SK-N-SH (cell line): ENCODE measurements at regions of chr2 and their contacts with region 1.

Region 1: GRCh38 chr2:2291500-2292260 is 39.4 kb downstream of the MYT1L start:
- DNase-seq: peak; percentile 85
- H3K4me3 ChIP-seq: no peak overlapping the region
- H3K27ac ChIP-seq: peak overlapping the region in 1 of 2 experiments; percentile 16; a peak in 1 of 4 replicates
- H3K4me1 ChIP-seq: peaks cover 0 to 58% of the 10 kb centered on the region in 2 experiments; a peak in 2 of 4 replicates
- H3K27me3 ChIP-seq: no peaks in the 10 kb centered on the region
- CTCF ChIP-seq: peak; percentile 49
- EP300 ChIP-seq: no peak
- RAD21 ChIP-seq: peak; percentile 82

Region 2: DNA sequence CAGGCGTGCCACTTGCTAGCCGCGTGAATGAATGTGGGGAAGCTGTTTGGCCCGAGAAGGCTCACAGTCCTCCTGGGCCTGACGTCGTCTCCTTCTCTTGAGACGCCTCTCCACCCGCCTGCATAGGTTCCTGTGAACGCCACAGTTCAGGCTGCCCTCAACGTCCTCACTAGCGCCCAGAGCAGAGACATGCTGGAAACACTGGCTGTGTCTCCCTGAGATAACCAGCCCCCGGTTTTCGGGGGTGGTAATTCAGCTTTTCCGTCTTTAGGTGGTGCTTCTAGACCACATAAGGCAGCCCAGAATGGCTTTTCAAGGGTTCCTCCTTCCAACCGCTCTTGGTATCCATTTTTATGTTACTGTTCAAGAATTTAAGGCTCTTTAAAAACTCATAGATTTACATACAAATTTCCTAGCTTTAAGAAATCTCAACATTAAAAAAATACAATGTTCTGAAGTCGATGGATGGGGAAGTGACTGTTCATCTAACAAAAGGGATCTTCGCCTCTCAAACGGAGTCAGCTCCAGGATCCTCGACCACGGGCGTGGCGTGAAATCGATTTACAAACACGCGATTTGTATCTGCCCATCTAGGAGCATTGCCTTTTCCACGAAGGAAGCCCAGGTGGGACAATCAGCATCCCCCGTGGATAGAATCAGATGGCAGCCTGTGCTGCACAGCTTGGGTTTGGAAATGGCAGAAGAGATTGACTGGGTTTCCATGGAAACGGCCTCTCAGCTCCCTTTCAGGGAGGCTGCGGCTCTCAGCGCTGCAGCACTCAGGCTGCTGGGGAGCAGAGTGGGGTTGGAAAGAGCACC is 436.7 kb before region 1 on chr2:
- CTCF ChIA-PET with region 1: interaction called, 21 read pairs
- POLR2A ChIA-PET with region 1: no interaction called
- DNase-seq: peak; percentile 95
- H3K4me3 ChIP-seq: peak overlapping the region; percentile 46 to 47
- H3K27ac ChIP-seq: peak overlapping the region in 1 of 2 experiments; percentile 55; a peak in 2 of 4 replicates
- H3K4me1 ChIP-seq: peaks cover 3 to 16% of the 10 kb centered on the region in 2 experiments; a peak in 3 of 4 replicates
- H3K27me3 ChIP-seq: peaks cover 30% of the 10 kb centered on the region
- CTCF ChIP-seq: peak; percentile 67
- EP300 ChIP-seq: no peak
- RAD21 ChIP-seq: peak; percentile 95

Region 3: DNA sequence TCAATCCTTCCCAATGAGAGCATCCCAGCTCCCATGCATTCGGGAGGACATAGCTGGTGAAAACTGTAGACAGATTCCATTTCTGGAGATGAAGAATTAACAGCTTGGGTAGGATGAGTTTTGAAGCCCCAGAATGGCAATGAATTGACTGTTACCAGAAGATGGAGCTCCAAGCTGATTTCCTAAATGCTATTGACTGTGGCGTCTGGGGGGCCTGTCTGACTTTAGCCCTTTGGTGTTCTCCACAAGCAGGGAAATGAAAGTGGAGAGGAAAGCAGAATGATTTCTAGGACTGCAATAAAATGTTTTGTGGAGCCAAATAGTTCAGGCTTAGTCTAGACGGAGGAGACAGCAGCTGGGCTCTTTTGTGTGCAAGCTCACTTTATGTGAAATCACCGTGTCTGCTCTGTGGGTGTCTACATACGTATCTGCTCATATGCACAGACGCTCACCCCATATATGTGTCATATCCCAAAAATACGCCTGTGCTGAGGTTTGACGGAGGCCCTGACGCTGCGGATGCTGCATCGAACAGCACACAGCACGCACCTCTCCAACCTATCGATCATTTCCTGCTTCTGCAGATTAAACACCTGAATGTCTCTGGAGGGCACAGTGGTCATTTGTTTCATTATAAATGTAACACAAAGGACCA is 381.0 kb before region 1 on chr2:
- CTCF ChIA-PET with region 1: interaction called, 10 read pairs
- POLR2A ChIA-PET with region 1: no interaction called
- DNase-seq: peak; percentile 61
- H3K4me3 ChIP-seq: no peak overlapping the region
- H3K27ac ChIP-seq: peak overlapping the region in 1 of 2 experiments; percentile 4; a peak in 1 of 4 replicates
- H3K4me1 ChIP-seq: peaks cover 0 to 25% of the 10 kb centered on the region in 2 experiments; a peak in 1 of 4 replicates
- H3K27me3 ChIP-seq: no peaks in the 10 kb centered on the region
- CTCF ChIP-seq: no peak; the same call in 1 of the 2 replicates
- EP300 ChIP-seq: no peak
- RAD21 ChIP-seq: peak; percentile 68

Region 4: DNA sequence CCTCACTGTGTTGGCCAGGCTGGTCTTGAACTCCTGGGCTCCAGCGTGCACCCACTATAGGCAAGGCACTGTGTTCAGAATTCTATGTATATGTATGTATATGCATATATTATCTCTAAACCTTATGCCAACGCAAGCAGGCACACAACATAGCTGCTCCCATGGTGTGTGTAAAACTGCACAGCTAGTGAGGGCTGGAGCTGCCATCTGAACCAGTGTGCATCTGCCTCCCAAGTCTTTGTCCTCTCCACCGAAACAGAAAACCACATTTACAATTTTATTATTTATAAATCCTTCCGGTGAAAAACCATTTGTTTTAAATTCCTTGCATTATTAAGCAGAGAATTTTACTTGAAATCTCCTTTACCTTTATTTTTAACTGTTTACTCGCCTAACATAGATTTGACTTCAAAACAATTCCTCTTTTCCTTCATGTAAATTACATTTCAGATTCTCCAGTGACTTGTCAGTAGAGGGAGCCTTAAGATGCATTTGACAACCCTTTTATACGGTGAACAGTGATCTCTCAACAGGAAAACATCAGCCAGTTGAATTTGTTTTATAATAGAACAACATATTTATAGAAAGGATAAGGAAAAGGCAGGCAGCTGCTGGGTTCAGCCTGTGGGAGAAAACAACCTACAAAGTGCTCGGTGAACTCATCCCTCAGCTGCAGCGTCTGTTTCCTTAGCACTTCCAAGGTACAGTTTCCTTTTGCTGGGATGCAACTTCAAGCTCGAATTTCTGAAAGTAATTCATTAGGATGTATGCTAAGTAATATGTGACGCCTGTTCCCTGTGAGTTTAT is 61.9 kb before region 1 on chr2:
- CTCF ChIA-PET with region 1: interaction called, 10 read pairs
- POLR2A ChIA-PET with region 1: no interaction called
- DNase-seq: peak; percentile 44
- H3K4me3 ChIP-seq: no peak overlapping the region
- H3K27ac ChIP-seq: peak overlapping the region in 1 of 2 experiments; percentile 50; a peak in 2 of 4 replicates
- H3K4me1 ChIP-seq: peaks cover 0 to 13% of the 10 kb centered on the region in 2 experiments; a peak in 2 of 4 replicates
- H3K27me3 ChIP-seq: no peaks in the 10 kb centered on the region
- CTCF ChIP-seq: peak; percentile 40
- EP300 ChIP-seq: no peak
- RAD21 ChIP-seq: peak; percentile 74

Region 5: GRCh38 chr2:2271469-2271941 is 20.2 kb before region 1 on chr2:
- CTCF ChIA-PET with region 1: interaction called, 10 read pairs
- POLR2A ChIA-PET with region 1: no interaction called
- DNase-seq: peak; percentile 82
- H3K4me3 ChIP-seq: no peak overlapping the region
- H3K27ac ChIP-seq: peak overlapping the region; percentile 71 to 95
- H3K4me1 ChIP-seq: peaks cover 12 to 42% of the 10 kb centered on the region in 2 experiments; a peak in 3 of 4 replicates
- H3K27me3 ChIP-seq: no peaks in the 10 kb centered on the region
- CTCF ChIP-seq: no peak
- EP300 ChIP-seq: peak in 1 of 2 experiments; percentile 52; a peak in 1 of 4 replicates
- RAD21 ChIP-seq: peak; percentile 56

Region 6: GRCh38 chr2:2280483-2280882 is 11.2 kb before region 1 on chr2:
- CTCF ChIA-PET with region 1: interaction called, 33 read pairs
- POLR2A ChIA-PET with region 1: no interaction called
- DNase-seq: no peak
- H3K4me3 ChIP-seq: no peak overlapping the region
- H3K27ac ChIP-seq: no peak overlapping the region
- H3K4me1 ChIP-seq: no peaks in the 10 kb centered on the region
- H3K27me3 ChIP-seq: no peaks in the 10 kb centered on the region
- CTCF ChIP-seq: no peak
- EP300 ChIP-seq: no peak
- RAD21 ChIP-seq: no peak

Region 7: DNA sequence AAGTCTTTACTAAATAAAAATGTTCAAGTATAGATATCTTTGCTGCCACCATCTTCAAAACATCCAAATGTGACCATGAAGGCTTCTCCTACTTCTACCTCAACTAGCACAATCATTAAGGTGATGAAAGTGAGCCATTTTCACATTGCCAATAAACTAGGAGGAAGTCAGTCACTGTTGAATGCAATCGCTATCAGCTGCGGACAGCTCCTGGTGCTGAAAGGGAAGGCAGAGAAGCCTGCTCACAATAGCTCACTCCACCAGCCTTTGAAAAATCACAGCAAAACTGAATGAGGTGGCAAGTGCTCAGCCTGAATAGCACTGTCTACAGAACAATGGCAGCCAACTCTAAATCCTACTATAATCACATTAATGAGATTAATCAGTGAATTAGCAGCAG is 37.2 kb after region 1 on chr2:
- CTCF ChIA-PET with region 1: interaction called, 11 read pairs
- POLR2A ChIA-PET with region 1: interaction called, 16 read pairs
- DNase-seq: no peak
- H3K4me3 ChIP-seq: peak overlapping the region in 1 of 2 experiments; percentile 37; a peak in 2 of 4 replicates
- H3K27ac ChIP-seq: peak overlapping the region in 1 of 2 experiments; percentile 100; a peak in 2 of 4 replicates
- H3K4me1 ChIP-seq: peaks cover 0 to 27% of the 10 kb centered on the region in 2 experiments; a peak in 2 of 4 replicates
- H3K27me3 ChIP-seq: no peaks in the 10 kb centered on the region
- CTCF ChIP-seq: no peak
- EP300 ChIP-seq: no peak; a peak in 1 of 4 replicates
- RAD21 ChIP-seq: no peak

Region 8: GRCh38 chr2:2484296-2484695 is 192.6 kb after region 1 on chr2:
- CTCF ChIA-PET with region 1: no interaction called
- POLR2A ChIA-PET with region 1: no interaction called
- DNase-seq: no peak
- H3K4me3 ChIP-seq: no peak overlapping the region
- H3K27ac ChIP-seq: no peak overlapping the region
- H3K4me1 ChIP-seq: no peaks in the 10 kb centered on the region
- H3K27me3 ChIP-seq: no peaks in the 10 kb centered on the region
- CTCF ChIP-seq: no peak
- EP300 ChIP-seq: no peak
- RAD21 ChIP-seq: no peak